Heart left ventricle (tissue), 16 donors: ENCODE measurements at regions of chr10 and their contacts with region 1.

Region 1: GRCh38 chr10:95246579-95247051 is 44.2 kb downstream of the PDLIM1 start:
- DNase-seq: peak; percentile 70 to 85 (median 73)
- ATAC-seq: peak; percentile 7 to 59 (median 46)
- H3K4me3 ChIP-seq: no peak overlapping the region
- H3K27ac ChIP-seq: peak overlapping the region in 10 of 12 donors; percentile 33 to 74 (median 60)
- H3K4me1 ChIP-seq: peaks cover 3 to 58% (median 40%) of the 10 kb centered on the region in 12 donors
- H3K27me3 ChIP-seq: no peaks in the 10 kb centered on the region
- CTCF ChIP-seq: peak; percentile 79 to 94 (median 89)
- POLR2A ChIP-seq: no peak

Region 2: DNA sequence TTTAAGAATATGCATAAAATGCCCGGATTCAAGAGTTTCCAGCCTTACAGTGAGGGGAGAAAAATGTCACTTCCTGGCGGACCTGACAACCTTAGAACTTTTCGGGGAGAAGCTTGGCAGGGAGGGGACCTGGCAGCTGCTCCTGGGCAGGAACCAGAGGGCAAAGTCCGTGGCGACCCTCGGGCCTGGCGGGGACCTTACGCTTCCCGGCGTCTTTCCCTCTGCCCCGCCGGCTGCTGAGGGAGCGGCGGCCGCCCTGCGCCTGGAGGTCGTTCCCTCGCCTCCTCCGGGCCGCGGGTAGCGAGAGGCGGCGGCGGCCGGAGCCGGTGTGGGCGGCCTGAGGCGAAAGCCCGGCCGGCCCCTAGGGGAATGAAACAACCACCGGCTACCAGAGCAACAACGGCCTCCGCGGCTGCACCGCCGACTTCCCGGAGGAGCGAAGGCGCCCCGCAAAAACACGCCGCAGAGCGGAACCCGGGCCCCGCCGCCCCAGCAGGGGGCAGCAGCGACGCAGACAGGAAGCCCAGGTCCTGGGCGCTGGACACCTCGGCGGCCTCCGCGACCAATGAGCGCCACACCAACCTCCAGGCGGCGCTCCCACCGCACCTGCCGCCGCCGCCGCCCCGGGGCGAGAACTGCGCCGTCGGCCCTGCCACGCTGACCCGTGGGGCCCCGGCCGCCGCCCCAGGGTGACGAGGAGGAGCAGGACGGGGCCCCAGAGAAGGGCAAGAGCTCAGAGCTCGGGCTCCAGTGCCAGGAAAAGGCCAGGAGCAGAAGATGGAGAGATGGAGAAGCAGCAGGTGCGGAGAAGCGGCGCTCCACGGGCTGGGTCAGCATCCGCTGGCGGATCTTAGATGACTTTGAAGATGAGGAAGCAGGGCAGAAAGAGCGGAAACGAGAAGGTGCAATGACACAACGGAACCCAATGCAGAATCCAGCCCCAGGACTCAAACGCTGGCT is 63.1 kb before region 1 on chr10:
- intact Hi-C with region 1: loop called in 1 of 10 experiments (anchors 5 kb)
- DNase-seq: peak; percentile 83 to 93 (median 86)
- ATAC-seq: peak; percentile 91 to 99 (median 98)
- H3K4me3 ChIP-seq: peak overlapping the region; percentile 52 to 83 (median 73)
- H3K27ac ChIP-seq: peak overlapping the region in 11 of 12 donors; percentile 53 to 85 (median 79)
- H3K4me1 ChIP-seq: peaks cover 0 to 11% (median 0%) of the 10 kb centered on the region in 12 donors
- H3K27me3 ChIP-seq: no peaks in the 10 kb centered on the region
- CTCF ChIP-seq: peak; percentile 94 to 100 (median 97)
- POLR2A ChIP-seq: peak in 1 of 2 donors; percentile 65

Region 3: DNA sequence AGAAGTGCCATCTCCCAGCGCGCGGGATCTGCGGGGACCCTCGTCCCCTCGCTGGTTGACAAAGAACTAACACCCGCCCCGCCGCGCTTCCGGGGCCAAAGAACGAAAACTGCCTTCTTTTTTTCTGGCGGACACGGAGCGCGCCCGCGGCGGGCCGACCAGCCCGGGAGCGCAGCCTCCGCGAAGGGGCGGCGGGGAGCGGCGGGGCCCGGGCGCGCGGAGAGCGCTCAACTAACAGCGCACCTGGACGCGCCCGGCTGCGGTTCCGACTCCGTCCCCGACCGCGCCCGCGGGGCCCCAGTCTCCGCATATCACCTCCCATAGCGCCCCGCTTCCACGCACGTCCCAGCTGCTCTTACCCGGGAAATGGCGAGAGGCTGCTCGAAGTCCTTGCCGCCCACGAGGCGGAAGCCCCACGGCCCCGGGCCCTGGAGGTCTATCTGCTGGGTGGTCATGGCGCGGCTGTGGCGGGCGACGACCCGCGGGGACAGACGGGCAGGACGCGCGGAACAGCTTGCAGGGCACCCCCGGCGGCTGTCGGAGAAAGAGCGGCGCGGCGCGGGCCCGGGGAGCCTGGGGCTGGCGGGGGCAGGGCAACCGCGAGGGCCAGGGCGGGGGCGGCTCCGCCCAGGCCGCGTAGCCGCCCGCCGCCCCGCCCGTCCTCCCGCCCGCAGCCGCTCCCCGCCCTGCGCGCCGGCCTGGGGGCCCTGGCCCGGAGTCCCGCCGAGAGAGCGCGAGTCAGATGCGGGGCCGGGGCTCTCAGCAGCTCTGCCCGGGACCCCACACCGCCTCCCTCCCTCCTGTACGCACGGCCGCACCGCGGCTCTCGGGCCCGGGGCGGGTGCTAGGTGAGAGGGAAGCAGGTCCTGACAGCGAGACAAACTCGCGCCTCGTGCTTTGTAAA is 44.1 kb after region 1 on chr10 and contains the start of gene PDLIM1:
- intact Hi-C with region 1: loop called (anchors 2 to 5 kb)
- DNase-seq: peak; percentile 82 to 88 (median 85)
- ATAC-seq: peak; percentile 23 to 92 (median 80)
- H3K4me3 ChIP-seq: peak within 1 kb of the TSS; percentile 77 to 100 (median 90)
- H3K27ac ChIP-seq: peak within 1 kb of the TSS; percentile 83 to 99 (median 94)
- H3K4me1 ChIP-seq: peaks cover 6 to 55% (median 46%) of the 10 kb centered on the region in 12 donors
- H3K27me3 ChIP-seq: no peaks in the 10 kb centered on the region
- CTCF ChIP-seq: peak in 8 of 12 donors; percentile 15 to 51 (median 43)
- POLR2A ChIP-seq: peak; percentile 8 to 92
- total RNA-seq, gene PDLIM1: 225 to 434 (median 349) TPM

Region 4: DNA sequence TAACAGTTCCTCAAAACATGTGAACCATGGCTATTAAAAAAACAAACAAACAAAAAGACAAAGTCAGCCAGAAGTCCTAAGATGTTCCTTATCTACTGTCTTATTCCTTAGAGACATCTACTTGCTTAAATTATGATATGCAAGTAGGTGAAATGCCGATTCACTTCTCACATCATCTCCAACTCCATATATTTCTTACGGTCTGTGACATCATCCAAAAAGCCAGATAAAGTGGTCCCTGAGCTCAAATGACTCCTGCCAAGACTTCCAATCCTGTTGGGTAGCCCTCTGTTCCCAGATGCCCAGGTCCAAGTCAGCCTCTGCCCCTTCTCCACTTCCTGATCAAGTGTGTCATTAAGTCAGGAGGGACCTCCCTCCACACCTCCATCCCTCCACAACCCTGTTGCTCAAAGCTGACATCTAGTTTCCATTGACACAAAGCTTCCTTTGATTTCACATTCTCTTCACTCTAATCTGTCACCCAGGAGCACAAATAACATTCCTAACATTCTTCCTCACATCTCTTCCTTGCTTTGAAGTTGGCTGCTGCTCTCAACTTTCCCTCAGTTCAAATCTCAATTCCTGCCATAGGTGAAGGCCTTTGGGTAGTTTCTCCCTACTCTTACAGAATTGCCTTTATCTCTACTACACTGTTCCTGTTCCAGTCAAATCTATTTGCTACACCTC is 100.2 kb after region 1 on chr10:
- intact Hi-C with region 1: loop called in 1 of 10 experiments (anchors 5 kb)
- DNase-seq: no peak
- ATAC-seq: peak in 2 of 4 donors; percentile 3 to 16
- H3K4me3 ChIP-seq: no peak overlapping the region
- H3K27ac ChIP-seq: peak overlapping the region in 6 of 12 donors; percentile 9 to 64 (median 24)
- H3K4me1 ChIP-seq: peaks cover 0 to 51% (median 20%) of the 10 kb centered on the region in 12 donors
- H3K27me3 ChIP-seq: no peaks in the 10 kb centered on the region
- CTCF ChIP-seq: no peak
- POLR2A ChIP-seq: no peak

Region 5: DNA sequence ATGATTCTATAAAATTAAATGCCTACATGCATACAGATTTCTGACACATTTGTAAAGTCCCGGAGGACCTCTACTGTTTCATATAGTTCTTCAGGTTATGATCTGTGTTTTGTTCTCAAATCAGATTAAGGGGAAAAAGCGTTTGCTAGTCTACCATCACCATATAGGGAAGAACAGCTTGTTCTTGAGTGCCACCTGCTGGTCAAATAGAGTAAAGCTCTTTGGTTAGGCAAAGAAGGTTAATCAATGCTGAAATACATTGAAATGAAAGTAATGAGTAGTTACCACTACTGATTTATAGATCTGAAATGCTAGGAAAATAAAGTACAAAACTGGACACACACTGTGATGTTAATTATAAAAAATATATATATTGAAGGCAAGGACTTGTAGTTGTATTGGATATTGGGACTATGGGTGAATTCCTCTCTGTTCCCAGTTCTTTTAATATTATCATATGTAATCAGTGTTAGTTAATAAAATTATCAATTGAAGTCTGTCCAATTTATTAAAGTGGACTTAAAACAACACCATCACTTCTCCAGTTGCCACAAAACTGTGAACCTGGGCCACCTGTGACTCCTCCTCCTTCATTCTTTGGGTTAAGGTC is 116.8 kb after region 1 on chr10:
- intact Hi-C with region 1: loop called (anchors 1 to 5 kb)
- DNase-seq: peak in 1 of 5 donors; percentile 38
- ATAC-seq: peak in 2 of 4 donors; percentile 26 to 41
- H3K4me3 ChIP-seq: no peak overlapping the region
- H3K27ac ChIP-seq: peak overlapping the region in 3 of 12 donors; percentile 3 to 70 (median 7)
- H3K4me1 ChIP-seq: peaks cover 5 to 51% (median 23%) of the 10 kb centered on the region in 12 donors
- H3K27me3 ChIP-seq: no peaks in the 10 kb centered on the region
- CTCF ChIP-seq: peak; percentile 85 to 95 (median 91)
- POLR2A ChIP-seq: no peak

Region 6: DNA sequence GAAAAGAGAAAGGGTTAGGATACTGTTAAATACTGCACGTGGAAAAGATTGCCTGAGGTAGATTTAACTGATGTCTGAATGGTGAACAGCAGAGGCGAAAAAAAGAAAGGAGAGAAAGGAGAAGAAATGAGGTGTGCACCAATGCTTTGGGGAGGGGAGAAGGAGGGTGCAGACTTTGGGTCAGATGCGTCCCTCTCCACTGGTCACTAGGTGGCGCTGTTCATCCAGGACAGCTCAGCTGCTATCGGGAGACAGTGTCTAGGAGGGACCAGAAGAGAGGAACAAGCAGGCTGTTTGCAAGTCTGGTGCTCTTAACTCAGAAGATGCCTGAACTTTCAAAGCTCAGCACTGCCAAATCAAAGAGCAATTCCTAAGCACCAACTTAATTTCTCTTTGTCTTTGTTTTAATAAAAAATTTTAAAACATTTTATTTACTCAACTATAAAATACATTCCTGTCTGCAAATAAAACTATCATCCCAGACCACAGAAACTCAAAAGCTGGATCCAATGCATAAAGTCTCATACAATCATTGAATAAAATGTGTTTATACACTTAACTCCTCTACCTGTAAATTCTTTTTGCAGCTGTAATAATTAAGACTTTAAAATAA is 128.1 kb after region 1 on chr10:
- intact Hi-C with region 1: loop called in 1 of 10 experiments (anchors 2 kb)
- DNase-seq: peak; percentile 71 to 85 (median 83)
- ATAC-seq: peak; percentile 70 to 89 (median 86)
- H3K4me3 ChIP-seq: no peak overlapping the region
- H3K27ac ChIP-seq: peak overlapping the region in 7 of 12 donors; percentile 0 to 77 (median 21)
- H3K4me1 ChIP-seq: peaks cover 0 to 61% (median 36%) of the 10 kb centered on the region in 12 donors
- H3K27me3 ChIP-seq: no peaks in the 10 kb centered on the region
- CTCF ChIP-seq: peak; percentile 86 to 98 (median 94)
- POLR2A ChIP-seq: no peak

Region 7: GRCh38 chr10:95601116-95601719 is 354.6 kb after region 1 on chr10:
- intact Hi-C with region 1: loop called in 6 of 10 experiments (anchors 10 kb)
- DNase-seq: peak; percentile 70 to 83 (median 79)
- ATAC-seq: peak; percentile 66 to 91 (median 86)
- H3K4me3 ChIP-seq: no peak overlapping the region
- H3K27ac ChIP-seq: peak overlapping the region in 5 of 12 donors; percentile 26 to 79 (median 48)
- H3K4me1 ChIP-seq: peaks cover 0 to 33% (median 12%) of the 10 kb centered on the region in 12 donors
- H3K27me3 ChIP-seq: no peaks in the 10 kb centered on the region
- CTCF ChIP-seq: peak; percentile 86 to 99 (median 96)
- POLR2A ChIP-seq: no peak

Region 8: DNA sequence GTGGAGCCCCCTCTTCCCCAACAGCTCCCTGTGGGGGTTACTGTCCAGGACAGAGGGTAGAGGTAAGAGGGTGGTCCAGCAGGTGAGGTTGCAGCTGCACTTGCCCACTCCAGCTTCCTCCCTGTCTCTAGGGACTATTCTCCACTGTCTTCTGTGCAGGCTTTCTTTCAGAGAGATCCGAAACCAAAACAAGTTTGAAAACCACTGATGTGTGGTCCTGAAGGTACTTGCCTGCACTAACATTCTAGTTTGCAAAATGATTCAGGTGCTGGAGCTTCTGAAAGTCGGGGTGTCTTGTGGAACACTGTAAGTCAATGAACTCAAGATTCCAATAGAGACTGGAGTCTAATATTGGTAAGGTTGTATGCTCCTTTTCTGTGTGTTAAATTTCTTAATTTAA is 961.7 kb after region 1 on chr10:
- intact Hi-C with region 1: no loop called
- DNase-seq: no peak
- ATAC-seq: no peak
- H3K4me3 ChIP-seq: no peak overlapping the region
- H3K27ac ChIP-seq: no peak overlapping the region
- H3K4me1 ChIP-seq: no peaks in the 10 kb centered on the region
- H3K27me3 ChIP-seq: peaks cover 0 to 14% (median 0%) of the 10 kb centered on the region in 9 donors
- CTCF ChIP-seq: no peak
- POLR2A ChIP-seq: no peak